ENCODE measurements at regions of chr10 and their contacts with region 1.

Region 1: DNA sequence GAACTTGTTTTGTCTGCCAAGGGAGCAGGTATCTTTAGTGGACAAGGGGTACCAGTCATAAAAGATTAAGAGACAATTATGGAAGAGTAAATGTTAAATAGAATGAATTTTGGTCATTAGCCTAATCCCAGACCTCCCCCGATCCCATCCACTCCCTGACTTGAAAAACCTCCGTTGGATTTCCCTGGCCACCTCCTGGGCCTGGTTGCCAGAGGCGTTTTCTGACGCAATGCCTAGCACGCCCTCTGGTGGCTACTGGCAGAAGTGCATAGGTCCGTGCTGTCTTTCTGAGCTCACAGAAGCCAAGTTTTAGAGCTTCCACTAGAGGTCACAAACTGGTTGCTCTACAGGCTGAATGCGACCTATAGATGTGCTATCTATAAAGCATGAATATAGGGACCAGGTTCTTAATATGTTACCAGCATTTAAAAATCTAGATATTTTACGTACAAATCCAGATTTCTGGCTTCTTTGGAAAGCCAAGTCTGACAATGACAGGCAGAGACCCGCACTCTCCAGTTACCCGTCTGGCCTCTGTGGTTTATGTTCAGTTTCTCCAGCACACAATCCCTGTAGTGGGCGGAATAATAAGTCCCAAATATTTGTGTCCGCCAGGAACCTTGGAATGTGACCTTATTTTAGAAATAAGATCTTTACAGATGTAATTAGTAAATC is 39.8 kb downstream of the SPOCK2 start:
- DNase-seq: peak; percentile 83 to 90
- ATAC-seq: peak; percentile 90 to 93
- H3K4me3 ChIP-seq: no peak overlapping the region
- H3K27ac ChIP-seq: no peak overlapping the region
- H3K4me1 ChIP-seq: peaks cover 9 to 10% of the 10 kb centered on the region in 2 donors
- H3K27me3 ChIP-seq: no peaks in the 10 kb centered on the region
- CTCF ChIP-seq: peak; percentile 99 to 100 (median 100)
- POLR2A ChIP-seq: no peak

Region 2: GRCh38 chr10:71713135-71714030 is 335.2 kb before region 1 on chr10:
- in situ Hi-C with region 1: no loop called
- intact Hi-C with region 1: no loop called
- DNase-seq: peak; percentile 35 to 72
- ATAC-seq: peak; percentile 59 to 68
- H3K4me3 ChIP-seq: no peak overlapping the region
- H3K27ac ChIP-seq: peak overlapping the region; percentile 71 to 81 (median 80)
- H3K4me1 ChIP-seq: peaks cover 26 to 31% of the 10 kb centered on the region in 2 donors
- H3K27me3 ChIP-seq: no peaks in the 10 kb centered on the region
- CTCF ChIP-seq: no peak
- POLR2A ChIP-seq: peak in 1 of 2 donors; percentile 4

Region 3: GRCh38 chr10:71893920-71894319 is 154.7 kb before region 1 on chr10:
- in situ Hi-C with region 1: loop called in 2 of 4 experiments (anchors 5 kb)
- intact Hi-C with region 1: loop called (anchors 1 kb)
- DNase-seq: no peak
- ATAC-seq: no peak
- H3K4me3 ChIP-seq: no peak overlapping the region
- H3K27ac ChIP-seq: no peak overlapping the region
- H3K4me1 ChIP-seq: peaks cover 5 to 7% of the 10 kb centered on the region in 2 donors
- H3K27me3 ChIP-seq: no peaks in the 10 kb centered on the region
- CTCF ChIP-seq: no peak
- POLR2A ChIP-seq: no peak

Region 4: DNA sequence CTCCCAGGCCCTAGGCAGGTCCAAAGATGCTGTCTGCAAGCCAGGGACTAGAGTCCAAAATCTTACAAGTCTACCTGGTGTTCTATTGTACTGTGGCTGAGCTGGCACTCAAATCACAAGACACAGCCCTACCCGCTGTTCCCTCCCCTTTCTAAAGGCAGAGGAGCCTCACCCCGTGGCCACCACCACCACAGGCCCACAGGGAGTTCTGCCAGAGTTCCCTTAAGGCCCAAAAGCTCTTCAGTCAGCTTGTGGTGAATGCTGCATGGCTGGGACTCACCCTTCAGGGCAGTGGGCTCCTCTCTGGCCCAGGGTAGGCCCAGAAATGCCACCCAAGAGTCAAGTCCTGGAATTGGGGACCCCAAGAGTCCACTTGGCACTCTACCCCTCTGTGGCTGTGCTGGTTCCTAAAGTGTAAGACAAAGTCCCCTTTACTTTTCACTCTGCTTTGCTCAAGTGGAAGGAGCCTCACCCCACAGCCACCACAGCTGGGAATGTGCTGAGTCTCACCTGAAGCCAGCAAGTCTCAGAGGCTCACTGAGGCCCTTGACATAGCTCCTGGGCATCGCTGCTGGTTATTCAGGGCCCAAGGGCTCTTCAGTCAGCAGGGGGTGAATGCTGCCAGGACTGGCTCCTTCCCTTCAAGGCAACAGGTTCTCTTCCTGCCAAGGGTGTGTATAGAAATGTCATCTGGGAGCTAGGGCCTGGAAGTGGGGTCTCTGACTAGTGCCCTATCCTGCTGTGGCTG is 148.7 kb before region 1 on chr10:
- in situ Hi-C with region 1: loop called in 2 of 4 experiments (anchors 5 kb)
- intact Hi-C with region 1: loop called (anchors 1 kb)
- DNase-seq: no peak
- ATAC-seq: no peak
- H3K4me3 ChIP-seq: no peak overlapping the region
- H3K27ac ChIP-seq: no peak overlapping the region
- H3K4me1 ChIP-seq: no peaks in the 10 kb centered on the region
- H3K27me3 ChIP-seq: no peaks in the 10 kb centered on the region
- CTCF ChIP-seq: no peak
- POLR2A ChIP-seq: no peak

Region 5: GRCh38 chr10:71957546-71958275 is 90.9 kb before region 1 on chr10:
- in situ Hi-C with region 1: loop called (anchors 5 kb)
- intact Hi-C with region 1: loop called (anchors 1 kb)
- DNase-seq: no peak
- ATAC-seq: no peak
- H3K4me3 ChIP-seq: no peak overlapping the region
- H3K27ac ChIP-seq: no peak overlapping the region
- H3K4me1 ChIP-seq: peaks cover 6 to 11% of the 10 kb centered on the region in 2 donors
- H3K27me3 ChIP-seq: no peaks in the 10 kb centered on the region
- CTCF ChIP-seq: no peak
- POLR2A ChIP-seq: no peak

Region 6: GRCh38 chr10:72175166-72175565 is 126.6 kb after region 1 on chr10:
- in situ Hi-C with region 1: no loop called
- intact Hi-C with region 1: no loop called
- DNase-seq: no peak
- ATAC-seq: no peak
- H3K4me3 ChIP-seq: no peak overlapping the region
- H3K27ac ChIP-seq: no peak overlapping the region
- H3K4me1 ChIP-seq: peaks cover 11 to 18% of the 10 kb centered on the region in 2 donors
- H3K27me3 ChIP-seq: no peaks in the 10 kb centered on the region
- CTCF ChIP-seq: no peak
- POLR2A ChIP-seq: no peak

Measured in gastrocnemius medialis (tissue), 4 donors.